ENCODE measurements at regions of chr1 and their contacts with region 1.

Region 1: GRCh38 chr1:26645734-26646133 is 50.1 kb upstream of the ARID1A start:
- DNase-seq: no peak
- H3K4me3 ChIP-seq: no peak overlapping the region
- H3K27ac ChIP-seq: no peak overlapping the region
- H3K4me1 ChIP-seq: no peaks in the 10 kb centered on the region
- H3K27me3 ChIP-seq: no peaks in the 10 kb centered on the region
- CTCF ChIP-seq: no peak
- POLR2A ChIP-seq: no peak

Region 2: DNA sequence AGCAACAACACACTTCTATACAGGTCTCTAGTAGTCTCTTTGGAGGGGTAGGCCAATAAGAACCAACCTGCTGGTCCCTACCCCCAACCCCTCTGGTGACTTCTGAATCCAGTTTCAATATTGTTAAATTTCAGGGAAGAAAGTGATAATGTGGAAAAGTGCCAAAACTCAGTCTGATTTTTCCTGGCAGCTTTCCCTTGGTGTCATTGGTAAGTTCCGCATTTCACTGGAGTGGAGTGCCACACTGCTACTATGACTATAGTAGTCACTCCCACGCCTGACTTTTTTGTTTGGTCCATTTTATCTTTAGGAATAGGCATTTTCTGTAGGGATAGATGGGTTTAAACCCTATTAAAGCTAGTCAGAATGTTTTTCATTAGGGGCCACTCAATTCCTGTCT is 44.4 kb after region 1 on chr1:
- CTCF ChIA-PET with region 1: no interaction called
- POLR2A ChIA-PET with region 1: interaction called, 10 read pairs
- dilution Hi-C with region 1: no loop called
- intact Hi-C with region 1: no loop called
- DNase-seq: no peak
- H3K4me3 ChIP-seq: no peak overlapping the region
- H3K27ac ChIP-seq: no peak overlapping the region
- H3K4me1 ChIP-seq: peaks cover 25% of the 10 kb centered on the region
- H3K27me3 ChIP-seq: no peaks in the 10 kb centered on the region
- CTCF ChIP-seq: no peak
- POLR2A ChIP-seq: no peak

Region 3: DNA sequence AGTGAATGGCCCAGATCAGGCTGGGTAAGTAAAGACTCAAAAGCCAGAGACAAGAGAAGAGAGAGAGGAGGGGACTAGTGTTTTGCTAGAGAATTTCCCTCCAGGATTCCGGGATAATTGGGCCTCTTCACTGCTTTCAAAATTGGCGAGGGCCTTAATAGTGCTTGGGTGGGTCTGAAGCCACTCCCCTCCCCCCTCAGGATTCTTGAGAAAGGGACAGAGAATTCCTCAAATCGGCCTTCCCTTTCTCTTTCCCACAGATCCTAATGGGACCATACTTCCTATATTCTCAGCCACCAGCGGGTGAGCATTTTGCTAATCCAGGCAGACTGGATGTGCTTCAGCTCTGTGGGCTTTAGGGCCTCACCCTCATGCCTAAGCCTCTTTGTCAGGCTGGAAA is 229.2 kb after region 1 on chr1:
- CTCF ChIA-PET with region 1: no interaction called
- POLR2A ChIA-PET with region 1: no interaction called
- dilution Hi-C with region 1: no loop called
- intact Hi-C with region 1: no loop called
- DNase-seq: no peak
- H3K4me3 ChIP-seq: no peak overlapping the region
- H3K27ac ChIP-seq: no peak overlapping the region
- H3K4me1 ChIP-seq: no peaks in the 10 kb centered on the region
- H3K27me3 ChIP-seq: no peaks in the 10 kb centered on the region
- CTCF ChIP-seq: no peak
- POLR2A ChIP-seq: no peak

Measured in endothelial cell of umbilical vein (primary cell).